A673 (cell line): ENCODE measurements at regions of chr6 and their contacts with region 1.

Region 1: GRCh38 chr6:147506704-147507114 is 1.8 kb upstream of the SAMD5 start:
- DNase-seq: peak; percentile 83
- H3K4me3 ChIP-seq: peak overlapping the region; percentile 78
- H3K27ac ChIP-seq: no peak overlapping the region
- H3K4me1 ChIP-seq: peaks cover 8% of the 10 kb centered on the region
- H3K27me3 ChIP-seq: peaks cover 12% of the 10 kb centered on the region
- CTCF ChIP-seq: peak; percentile 94

Region 2: GRCh38 chr6:146857180-146857979 is 649.3 kb before region 1 on chr6:
- CTCF ChIA-PET with region 1: no interaction called
- POLR2A ChIA-PET with region 1: no interaction called
- intact Hi-C with region 1: loop called (anchors 10 kb)
- DNase-seq: peak; percentile 72
- H3K4me3 ChIP-seq: no peak overlapping the region
- H3K27ac ChIP-seq: no peak overlapping the region
- H3K4me1 ChIP-seq: peaks cover 7% of the 10 kb centered on the region
- H3K27me3 ChIP-seq: no peaks in the 10 kb centered on the region
- CTCF ChIP-seq: peak; percentile 99

Region 3: GRCh38 chr6:147341486-147341885 is 165.2 kb before region 1 on chr6:
- CTCF ChIA-PET with region 1: no interaction called
- POLR2A ChIA-PET with region 1: no interaction called
- intact Hi-C with region 1: no loop called
- DNase-seq: no peak
- H3K4me3 ChIP-seq: no peak overlapping the region
- H3K27ac ChIP-seq: no peak overlapping the region
- H3K4me1 ChIP-seq: no peaks in the 10 kb centered on the region
- H3K27me3 ChIP-seq: no peaks in the 10 kb centered on the region
- CTCF ChIP-seq: no peak

Region 4: GRCh38 chr6:147642458-147642857 is 135.7 kb after region 1 on chr6:
- CTCF ChIA-PET with region 1: no interaction called
- POLR2A ChIA-PET with region 1: no interaction called
- intact Hi-C with region 1: loop called (anchors 1 kb)
- DNase-seq: no peak
- H3K4me3 ChIP-seq: no peak overlapping the region
- H3K27ac ChIP-seq: peak overlapping the region; percentile 58
- H3K4me1 ChIP-seq: peaks cover 50% of the 10 kb centered on the region
- H3K27me3 ChIP-seq: no peaks in the 10 kb centered on the region
- CTCF ChIP-seq: no peak

Region 5: DNA sequence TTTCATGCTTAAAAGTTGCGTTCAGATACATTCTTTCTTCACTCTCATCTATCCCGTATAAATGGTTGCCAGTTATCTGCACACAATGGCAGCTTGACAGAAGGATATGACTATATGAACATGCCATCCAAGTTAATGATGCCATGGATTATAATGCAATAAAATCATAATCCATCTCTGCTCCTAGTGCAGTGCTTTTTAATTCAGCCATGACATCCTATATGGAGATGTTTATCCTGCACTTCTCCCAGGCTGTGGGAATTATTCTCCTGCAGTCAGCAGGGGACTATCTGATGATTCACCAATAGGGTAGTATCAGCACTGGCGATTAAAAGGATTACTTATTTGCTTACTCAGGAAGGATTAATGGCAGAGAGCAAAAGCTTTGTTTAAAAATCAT is 275.6 kb after region 1 on chr6:
- CTCF ChIA-PET with region 1: no interaction called
- POLR2A ChIA-PET with region 1: no interaction called
- intact Hi-C with region 1: loop called (anchors 5 kb)
- DNase-seq: peak; percentile 93
- H3K4me3 ChIP-seq: no peak overlapping the region
- H3K27ac ChIP-seq: peak overlapping the region; percentile 38
- H3K4me1 ChIP-seq: peaks cover 53% of the 10 kb centered on the region
- H3K27me3 ChIP-seq: no peaks in the 10 kb centered on the region
- CTCF ChIP-seq: no peak

Region 6: DNA sequence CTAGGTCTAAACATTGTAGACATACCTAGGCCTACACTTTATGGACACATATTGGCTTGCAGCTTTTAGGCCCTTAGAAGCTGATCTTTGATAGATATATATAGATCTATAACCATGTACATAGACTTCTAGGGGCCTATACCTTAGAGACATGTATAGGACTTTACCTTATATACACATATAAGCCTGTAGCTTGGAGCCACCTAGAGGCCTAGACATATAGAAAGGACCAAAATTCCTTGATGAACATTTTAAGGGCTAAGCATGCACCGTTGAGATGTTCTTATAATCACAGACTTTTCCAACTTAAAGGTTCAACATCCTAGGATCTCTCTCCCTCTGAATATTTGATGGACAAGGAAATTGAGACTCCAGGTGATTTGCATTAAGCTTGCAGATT is 464.3 kb after region 1 on chr6:
- CTCF ChIA-PET with region 1: interaction called, 3 read pairs
- POLR2A ChIA-PET with region 1: no interaction called
- intact Hi-C with region 1: loop called (anchors 1 kb)
- DNase-seq: peak; percentile 55
- H3K4me3 ChIP-seq: no peak overlapping the region
- H3K27ac ChIP-seq: no peak overlapping the region
- H3K4me1 ChIP-seq: no peaks in the 10 kb centered on the region
- H3K27me3 ChIP-seq: no peaks in the 10 kb centered on the region
- CTCF ChIP-seq: peak; percentile 60

Region 7: GRCh38 chr6:148166339-148166968 is 659.7 kb after region 1 on chr6:
- CTCF ChIA-PET with region 1: interaction called, 8 read pairs
- POLR2A ChIA-PET with region 1: no interaction called
- intact Hi-C with region 1: loop called (anchors 1 kb)
- DNase-seq: peak; percentile 77
- H3K4me3 ChIP-seq: no peak overlapping the region
- H3K27ac ChIP-seq: no peak overlapping the region
- H3K4me1 ChIP-seq: no peaks in the 10 kb centered on the region
- H3K27me3 ChIP-seq: no peaks in the 10 kb centered on the region
- CTCF ChIP-seq: peak; percentile 77